A673 (cell line): ENCODE measurements at regions of chr1 and their contacts with region 1.

Region 1: GRCh38 chr1:8348777-8349491 is 31.0 kb downstream of the SLC45A1 start:
- DNase-seq: peak; percentile 77
- H3K4me3 ChIP-seq: no peak overlapping the region
- H3K27ac ChIP-seq: no peak overlapping the region
- H3K4me1 ChIP-seq: peaks cover 17% of the 10 kb centered on the region
- H3K27me3 ChIP-seq: no peaks in the 10 kb centered on the region
- CTCF ChIP-seq: peak; percentile 90

Region 2: DNA sequence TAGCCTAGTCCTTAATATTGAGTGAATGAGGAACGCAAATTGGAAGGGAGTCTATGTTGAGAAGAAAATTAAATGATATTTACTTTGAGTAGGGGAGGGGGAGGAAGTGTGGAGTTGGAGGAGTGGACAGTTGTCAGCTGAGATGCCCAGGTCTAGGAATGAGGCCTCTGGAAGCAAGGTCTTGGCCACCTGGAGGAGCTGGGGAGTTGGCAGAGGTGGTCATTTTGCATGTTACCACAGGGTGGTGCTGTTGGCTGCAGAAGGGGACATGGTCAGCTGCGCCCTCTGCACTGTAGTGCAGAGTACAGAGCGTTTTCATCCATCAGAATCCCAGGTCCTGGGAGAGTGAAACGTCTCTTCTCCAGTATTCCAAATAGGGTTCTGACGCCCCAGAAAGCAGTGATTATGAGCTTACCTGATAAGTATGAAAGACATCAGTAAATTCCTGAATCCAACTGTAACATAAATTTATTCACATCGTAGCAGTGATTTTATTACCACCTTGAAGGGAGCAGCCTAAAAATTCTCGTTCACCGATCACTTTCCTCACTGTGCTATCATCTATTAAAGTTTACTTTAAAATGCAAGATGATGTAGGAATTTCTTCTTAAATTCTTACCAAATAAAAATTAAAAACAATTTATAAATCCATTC is 373.6 kb before region 1 on chr1:
- CTCF ChIA-PET with region 1: interaction called, 8 read pairs
- POLR2A ChIA-PET with region 1: no interaction called
- intact Hi-C with region 1: loop called (anchors 2 kb)
- DNase-seq: peak; percentile 63
- H3K4me3 ChIP-seq: no peak overlapping the region
- H3K27ac ChIP-seq: no peak overlapping the region
- H3K4me1 ChIP-seq: no peaks in the 10 kb centered on the region
- H3K27me3 ChIP-seq: no peaks in the 10 kb centered on the region
- CTCF ChIP-seq: peak; percentile 89

Region 3: GRCh38 chr1:8015036-8015808 is 333.7 kb before region 1 on chr1:
- CTCF ChIA-PET with region 1: interaction called, 31 read pairs
- POLR2A ChIA-PET with region 1: no interaction called
- intact Hi-C with region 1: loop called (anchors 10 kb)
- DNase-seq: peak; percentile 90
- H3K4me3 ChIP-seq: no peak overlapping the region
- H3K27ac ChIP-seq: peak overlapping the region; percentile 43
- H3K4me1 ChIP-seq: peaks cover 56% of the 10 kb centered on the region
- H3K27me3 ChIP-seq: no peaks in the 10 kb centered on the region
- CTCF ChIP-seq: peak; percentile 78

Region 4: DNA sequence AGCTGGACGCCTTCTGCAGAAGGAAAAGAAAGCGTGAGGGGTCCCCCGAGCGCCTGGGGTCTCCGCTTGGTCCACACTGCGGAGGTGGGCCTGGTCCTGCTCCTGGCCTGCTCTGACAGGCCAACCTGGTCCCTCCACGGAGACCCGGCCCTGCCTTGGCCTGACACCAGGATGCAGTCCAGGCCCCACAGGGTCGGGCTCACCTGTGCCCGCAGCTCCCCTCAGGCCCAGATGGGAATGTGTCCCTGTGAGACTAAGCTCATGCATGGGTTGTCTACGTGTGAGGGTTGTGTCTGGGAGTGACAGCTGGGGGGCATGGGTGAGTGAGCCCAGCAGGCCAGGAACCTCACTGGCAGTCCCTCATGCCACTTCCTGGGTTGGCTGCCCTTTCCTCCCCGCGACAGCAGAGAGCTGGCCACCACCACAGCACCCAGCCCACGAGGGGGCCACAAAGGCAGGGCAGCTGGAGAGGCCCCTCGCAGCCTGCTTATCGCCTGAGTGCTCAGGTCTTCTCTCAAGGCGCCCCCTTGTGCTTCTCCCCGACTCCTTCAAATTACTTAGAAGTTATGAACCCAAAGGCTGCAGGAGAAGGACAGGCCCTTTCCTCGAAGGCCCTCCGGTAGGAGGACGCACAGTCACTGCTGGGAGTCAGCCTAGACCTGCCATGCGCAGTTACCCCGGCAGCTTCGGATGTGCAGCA is 10.1 kb after region 1 on chr1:
- CTCF ChIA-PET with region 1: interaction called, 11 read pairs
- POLR2A ChIA-PET with region 1: no interaction called
- intact Hi-C with region 1: no loop called
- DNase-seq: no peak
- H3K4me3 ChIP-seq: no peak overlapping the region
- H3K27ac ChIP-seq: no peak overlapping the region
- H3K4me1 ChIP-seq: peaks cover 16% of the 10 kb centered on the region
- H3K27me3 ChIP-seq: no peaks in the 10 kb centered on the region
- CTCF ChIP-seq: peak; percentile 20; the same call in 1 of the 2 replicates